AG04450 (cell line): ENCODE measurements at regions of chrX and their contacts with region 1.

Region 1: GRCh38 chrX:68828740-68829552 is at the start of gene EFNB1:
- DNase-seq: peak; percentile 92
- H3K4me3 ChIP-seq: peak within 1 kb of the TSS; percentile 73
- H3K27ac ChIP-seq: peak within 1 kb of the TSS; percentile 47
- H3K27me3 ChIP-seq: peaks cover 3% of the 10 kb centered on the region
- CTCF ChIP-seq: no peak
- polyA plus RNA-seq, gene EFNB1: 19.1 and 22.8 TPM in 2 replicates

Region 2: DNA sequence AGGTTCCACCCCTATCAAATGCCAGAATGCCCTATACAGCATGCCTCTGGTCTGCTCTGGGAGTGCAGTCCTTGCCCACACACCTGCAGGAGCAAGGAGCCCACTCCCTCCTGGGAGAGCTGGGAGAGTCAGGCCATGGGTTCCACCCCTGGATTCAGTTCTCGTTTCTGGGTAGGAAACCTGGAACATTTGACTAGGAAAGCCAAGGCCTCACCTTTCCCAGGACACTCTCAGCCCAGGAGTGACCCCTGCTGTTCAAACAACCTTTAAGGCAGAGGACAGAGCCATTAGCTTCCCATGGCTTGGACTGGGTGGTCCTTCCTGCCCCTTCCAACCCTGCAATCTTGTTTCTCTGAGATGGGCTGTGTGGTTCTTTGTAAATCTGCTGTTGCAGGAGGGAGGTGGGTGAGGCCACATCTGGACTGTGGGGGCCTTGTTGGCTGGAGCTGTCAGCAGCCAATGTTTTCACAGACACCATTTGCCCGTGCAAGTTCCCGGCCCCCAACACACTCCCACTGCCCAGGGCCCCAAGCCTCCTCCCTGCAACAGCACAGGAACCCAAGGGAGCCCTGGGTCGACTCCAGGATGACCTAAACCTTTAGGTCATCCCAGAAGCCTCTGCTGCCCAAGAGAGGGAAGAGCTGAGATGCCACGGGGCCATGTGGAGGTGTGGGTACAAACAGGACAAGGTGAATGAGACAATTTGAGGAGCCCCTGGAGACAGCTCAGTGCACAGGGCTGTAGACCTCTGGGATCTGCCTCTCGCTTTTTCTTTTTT is 231.9 kb after region 1 on chrX:
- CTCF ChIA-PET with region 1: interaction called, 41 read pairs
- POLR2A ChIA-PET with region 1: interaction called, 12 read pairs
- DNase-seq: no peak
- H3K4me3 ChIP-seq: no peak overlapping the region
- H3K27ac ChIP-seq: no peak overlapping the region
- H3K27me3 ChIP-seq: no peaks in the 10 kb centered on the region
- CTCF ChIP-seq: peak; percentile 52

Region 3: GRCh38 chrX:69158166-69158980 is 329.4 kb after region 1 on chrX:
- CTCF ChIA-PET with region 1: interaction called, 11 read pairs
- POLR2A ChIA-PET with region 1: interaction called, 8 read pairs
- DNase-seq: peak; percentile 48
- H3K4me3 ChIP-seq: no peak overlapping the region
- H3K27ac ChIP-seq: no peak overlapping the region
- H3K27me3 ChIP-seq: no peaks in the 10 kb centered on the region
- CTCF ChIP-seq: peak; percentile 68

Region 4: GRCh38 chrX:69222103-69223090 is 393.5 kb after region 1 on chrX:
- CTCF ChIA-PET with region 1: interaction called, 188 read pairs
- POLR2A ChIA-PET with region 1: interaction called, 13 read pairs
- DNase-seq: peak; percentile 15
- H3K4me3 ChIP-seq: no peak overlapping the region
- H3K27ac ChIP-seq: no peak overlapping the region
- H3K27me3 ChIP-seq: no peaks in the 10 kb centered on the region
- CTCF ChIP-seq: peak; percentile 80

Region 5: GRCh38 chrX:69280933-69281332 is 452.0 kb after region 1 on chrX:
- CTCF ChIA-PET with region 1: interaction called, 56 read pairs
- POLR2A ChIA-PET with region 1: no interaction called
- DNase-seq: no peak
- H3K4me3 ChIP-seq: no peak overlapping the region
- H3K27ac ChIP-seq: no peak overlapping the region
- H3K27me3 ChIP-seq: peaks cover 4% of the 10 kb centered on the region
- CTCF ChIP-seq: no peak